ENCODE measurements at regions of chr19 and their contacts with region 1.

Region 1: DNA sequence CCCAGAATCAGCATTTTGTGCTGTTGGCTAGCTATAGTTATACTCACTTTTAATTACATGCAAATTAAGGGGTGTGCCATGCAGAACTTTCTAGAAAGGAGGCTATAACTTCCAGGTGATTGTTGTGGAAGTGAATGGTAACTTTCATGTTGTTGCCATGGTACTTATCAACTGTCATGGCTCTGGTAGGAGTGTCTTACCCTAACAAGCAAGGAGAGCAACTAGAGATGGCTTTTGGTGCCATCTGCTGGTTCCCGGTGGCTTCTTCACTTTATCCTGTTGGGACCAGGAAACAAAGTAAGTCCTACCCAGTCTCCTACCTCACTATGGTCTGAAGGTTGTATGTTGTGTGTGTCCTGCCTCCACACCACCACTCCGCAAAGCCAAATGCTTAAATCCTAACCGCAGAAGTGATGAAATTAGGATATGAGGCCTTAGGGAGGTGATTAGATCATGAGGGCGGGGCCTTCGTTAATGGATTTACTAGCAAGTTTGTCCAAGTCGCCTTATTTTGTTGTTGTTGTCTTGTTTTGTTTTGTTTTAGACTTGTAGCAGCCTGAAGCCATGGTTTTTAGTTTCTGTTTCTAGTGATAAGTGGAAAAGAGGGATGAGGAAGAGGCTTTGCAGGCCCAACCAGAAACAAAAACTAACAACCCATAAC is 22.6 kb downstream of the FBXL12 start:
- DNase-seq: peak; percentile 60 to 74
- ATAC-seq: peak; percentile 51 to 69
- H3K4me3 ChIP-seq: no peak overlapping the region
- H3K27ac ChIP-seq: no peak overlapping the region
- H3K4me1 ChIP-seq: peaks cover 0 to 3% of the 10 kb centered on the region in 2 donors
- H3K27me3 ChIP-seq: peaks cover 0 to 15% (median 12%) of the 10 kb centered on the region in 3 donors
- CTCF ChIP-seq: peak; percentile 60 to 77 (median 72)
- POLR2A ChIP-seq: no peak

Region 2: GRCh38 chr19:9140159-9140874 is 655.9 kb before region 1 on chr19 and contains the start of gene ZNF317:
- in situ Hi-C with region 1: loop called (anchors 5 to 10 kb)
- intact Hi-C with region 1: loop called (anchors 1 kb)
- DNase-seq: peak; percentile 87 to 91
- ATAC-seq: peak; percentile 99
- H3K4me3 ChIP-seq: peak within 1 kb of the TSS; percentile 84 to 88 (median 87)
- H3K27ac ChIP-seq: peak within 1 kb of the TSS; percentile 90 to 93 (median 92)
- H3K4me1 ChIP-seq: peaks cover 16 to 23% of the 10 kb centered on the region in 2 donors
- H3K27me3 ChIP-seq: no peaks in the 10 kb centered on the region
- CTCF ChIP-seq: no peak
- POLR2A ChIP-seq: peak; percentile 28 to 70
- total RNA-seq, gene ZNF317: 9.1 to 15.0 (median 12.2) TPM

Region 3: GRCh38 chr19:9205501-9206113 is 590.6 kb before region 1 on chr19:
- in situ Hi-C with region 1: loop called in 3 of 4 experiments (anchors 10 to 25 kb)
- intact Hi-C with region 1: loop called (anchors 1 kb)
- DNase-seq: peak; percentile 10 to 42
- ATAC-seq: no peak
- H3K4me3 ChIP-seq: peak overlapping the region; percentile 18 to 38 (median 35)
- H3K27ac ChIP-seq: no peak overlapping the region
- H3K4me1 ChIP-seq: no peaks in the 10 kb centered on the region
- H3K27me3 ChIP-seq: peaks cover 0 to 2% (median 0%) of the 10 kb centered on the region in 3 donors
- CTCF ChIP-seq: peak; percentile 41 to 83 (median 63)
- POLR2A ChIP-seq: no peak

Region 4: GRCh38 chr19:9309139-9309973 is 486.9 kb before region 1 on chr19 and contains the start of gene ZNF699:
- in situ Hi-C with region 1: loop called in 3 of 4 experiments (anchors 25 kb)
- intact Hi-C with region 1: loop called (anchors 10 kb)
- DNase-seq: peak; percentile 93 to 95
- ATAC-seq: peak; percentile 99 to 100
- H3K4me3 ChIP-seq: peak within 1 kb of the TSS; percentile 79 to 100 (median 83)
- H3K27ac ChIP-seq: peak within 1 kb of the TSS; percentile 77 to 94 (median 85)
- H3K4me1 ChIP-seq: peaks cover 0 to 11% of the 10 kb centered on the region in 2 donors
- H3K27me3 ChIP-seq: no peaks in the 10 kb centered on the region
- CTCF ChIP-seq: no peak
- POLR2A ChIP-seq: peak; percentile 44 to 49
- total RNA-seq, gene ZNF699: 0.87 to 4.1 (median 1.8) TPM

Region 5: GRCh38 chr19:9621156-9622037 is 174.8 kb before region 1 on chr19 and contains the start of gene ZNF561:
- in situ Hi-C with region 1: loop called in 2 of 4 experiments (anchors 5 to 10 kb)
- intact Hi-C with region 1: loop called (anchors 1 kb)
- DNase-seq: peak; percentile 70
- ATAC-seq: peak; percentile 96 to 98
- H3K4me3 ChIP-seq: peak within 1 kb of the TSS; percentile 70 to 96 (median 86)
- H3K27ac ChIP-seq: peak within 1 kb of the TSS; percentile 82 to 92 (median 90)
- H3K4me1 ChIP-seq: peaks cover 14 to 22% of the 10 kb centered on the region in 2 donors
- H3K27me3 ChIP-seq: no peaks in the 10 kb centered on the region
- CTCF ChIP-seq: no peak
- POLR2A ChIP-seq: no peak
- total RNA-seq, gene ZNF561: 8.7 to 17.5 (median 14.4) TPM

Region 6: GRCh38 chr19:9741476-9742171 is 54.6 kb before region 1 on chr19:
- in situ Hi-C with region 1: no loop called
- intact Hi-C with region 1: no loop called
- DNase-seq: no peak
- ATAC-seq: no peak
- H3K4me3 ChIP-seq: no peak overlapping the region
- H3K27ac ChIP-seq: no peak overlapping the region
- H3K4me1 ChIP-seq: no peaks in the 10 kb centered on the region
- H3K27me3 ChIP-seq: no peaks in the 10 kb centered on the region
- CTCF ChIP-seq: no peak
- POLR2A ChIP-seq: no peak

Region 7: DNA sequence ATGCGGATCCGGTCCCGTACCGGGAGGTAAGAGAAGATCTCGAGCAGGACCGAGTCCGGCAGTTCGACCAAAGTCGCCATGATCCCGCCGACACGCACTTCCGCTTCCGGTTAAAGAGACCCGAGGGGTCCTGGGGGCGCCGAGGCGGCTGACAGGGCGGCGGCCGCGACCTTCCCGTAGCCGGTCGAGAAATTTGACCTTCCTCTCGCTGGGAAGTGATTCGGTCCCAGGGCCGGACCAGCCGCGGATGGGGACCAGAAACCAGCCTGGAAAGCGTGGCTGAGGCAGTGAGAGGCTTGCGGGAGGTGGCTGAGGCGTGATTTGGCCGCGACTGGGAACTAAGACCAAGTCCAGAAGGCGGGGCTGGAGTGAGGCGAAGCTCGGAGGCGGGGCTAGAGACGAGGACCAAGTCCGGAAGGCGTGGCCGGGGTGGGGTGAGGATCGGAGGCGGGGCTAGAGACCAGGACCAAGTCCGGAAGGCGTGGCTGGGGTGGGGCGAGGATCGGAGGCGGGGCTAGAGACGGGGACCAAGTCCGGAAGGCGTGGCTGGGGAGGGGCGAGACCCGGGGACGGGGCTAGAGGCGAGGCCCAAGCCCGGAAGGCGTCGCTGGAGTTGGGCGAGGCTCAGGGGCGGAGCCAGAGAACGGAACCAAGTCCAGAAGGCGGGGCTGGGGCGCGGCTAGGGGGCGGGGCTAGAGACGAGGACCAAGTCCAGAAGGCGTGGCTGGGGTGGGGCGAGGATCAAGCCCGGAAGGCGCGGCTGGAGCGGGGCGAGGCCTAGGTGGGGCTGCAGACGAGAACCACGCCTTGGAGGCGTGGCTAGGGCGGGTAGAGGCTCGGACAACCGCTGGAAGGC is 22.7 kb after region 1 on chr19 and contains the start of gene FBXL12:
- in situ Hi-C with region 1: no loop called
- intact Hi-C with region 1: loop called (anchors 1 kb)
- DNase-seq: peak; percentile 100
- ATAC-seq: peak; percentile 88 to 91
- H3K4me3 ChIP-seq: peak within 1 kb of the TSS; percentile 93 to 100 (median 95)
- H3K27ac ChIP-seq: peak within 1 kb of the TSS; percentile 91 to 100 (median 98)
- H3K4me1 ChIP-seq: peaks cover 10 to 23% of the 10 kb centered on the region in 2 donors
- H3K27me3 ChIP-seq: no peaks in the 10 kb centered on the region
- CTCF ChIP-seq: no peak
- POLR2A ChIP-seq: peak; percentile 71 to 79
- total RNA-seq, gene FBXL12: 7.6 to 28.4 (median 15.1) TPM